ENCODE measurements at regions of chr2 and their contacts with region 1.

Region 1: DNA sequence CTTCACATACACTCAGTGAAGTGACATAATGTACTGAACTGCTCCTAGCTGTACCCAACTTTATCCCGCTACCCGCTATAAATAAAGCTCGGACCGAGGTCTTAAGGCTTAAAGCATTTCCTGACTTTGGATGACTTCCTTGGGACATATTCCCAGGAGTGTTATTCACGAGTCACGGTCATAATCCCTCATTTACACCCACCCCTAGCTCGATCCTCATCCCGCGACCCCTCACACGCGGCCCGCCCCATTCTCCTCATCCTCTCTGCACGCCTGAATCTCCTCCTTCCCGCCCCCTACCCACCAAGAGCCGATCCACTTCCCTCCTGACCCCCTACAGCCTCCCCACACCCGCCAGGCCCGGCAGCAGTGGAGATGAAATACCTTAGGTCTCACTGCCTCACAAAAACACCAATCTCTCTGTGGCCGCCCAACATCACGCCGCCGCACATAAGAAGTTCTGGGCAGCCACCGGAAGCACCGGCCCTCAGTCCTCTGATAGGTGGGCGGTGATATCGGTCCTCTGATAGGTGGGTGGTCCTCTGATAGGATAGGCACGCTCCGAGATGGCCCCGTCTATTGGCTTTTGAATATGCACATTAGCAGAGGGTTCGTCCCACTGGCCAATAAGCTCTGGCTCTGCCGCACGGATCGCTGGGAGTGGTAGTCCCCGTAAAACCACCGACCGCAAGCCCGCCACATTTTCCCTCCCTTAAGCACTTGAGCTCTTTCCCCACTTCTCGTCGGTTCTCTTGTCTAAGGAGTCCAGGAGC is at the start of gene WDCP:
- DNase-seq: peak; percentile 99
- ATAC-seq: peak; percentile 98
- H3K4me3 ChIP-seq: peak within 1 kb of the TSS; percentile 73
- H3K27ac ChIP-seq: peak within 1 kb of the TSS; percentile 61
- H3K4me1 ChIP-seq: no peaks in the 10 kb centered on the region
- H3K27me3 ChIP-seq: no peaks in the 10 kb centered on the region
- CTCF ChIP-seq: no peak
- POLR2A ChIP-seq: peak; percentile 79
- RAD21 ChIP-seq: no peak
- total RNA-seq, gene WDCP: 18.6 and 21.7 TPM in 2 replicates

Region 2: GRCh38 chr2:23939987-23940717 is 107.0 kb before region 1 on chr2 and contains the start of gene UBXN2A:
- CTCF ChIA-PET with region 1: no interaction called
- POLR2A ChIA-PET with region 1: no interaction called
- dilution Hi-C with region 1: no loop called
- in situ Hi-C with region 1: no loop called
- intact Hi-C with region 1: loop called (anchors 10 kb)
- DNase-seq: peak; percentile 77
- ATAC-seq: peak; percentile 89
- H3K4me3 ChIP-seq: peak within 1 kb of the TSS; percentile 96
- H3K27ac ChIP-seq: peak within 1 kb of the TSS; percentile 82
- H3K4me1 ChIP-seq: peaks cover 12% of the 10 kb centered on the region
- H3K27me3 ChIP-seq: no peaks in the 10 kb centered on the region
- CTCF ChIP-seq: no peak
- POLR2A ChIP-seq: no peak
- RAD21 ChIP-seq: no peak
- total RNA-seq, gene UBXN2A: 7.7 and 10.8 TPM in 2 replicates

Region 3: GRCh38 chr2:24088821-24089359 is 41.8 kb after region 1 on chr2:
- CTCF ChIA-PET with region 1: no interaction called
- POLR2A ChIA-PET with region 1: no interaction called
- dilution Hi-C with region 1: no loop called
- in situ Hi-C with region 1: no loop called
- intact Hi-C with region 1: no loop called
- DNase-seq: no peak
- ATAC-seq: no peak
- H3K4me3 ChIP-seq: no peak overlapping the region
- H3K27ac ChIP-seq: no peak overlapping the region
- H3K4me1 ChIP-seq: peaks cover 2% of the 10 kb centered on the region; the same call in 1 of the 2 replicates
- H3K27me3 ChIP-seq: no peaks in the 10 kb centered on the region
- CTCF ChIP-seq: no peak
- POLR2A ChIP-seq: no peak
- RAD21 ChIP-seq: no peak

Region 4: DNA sequence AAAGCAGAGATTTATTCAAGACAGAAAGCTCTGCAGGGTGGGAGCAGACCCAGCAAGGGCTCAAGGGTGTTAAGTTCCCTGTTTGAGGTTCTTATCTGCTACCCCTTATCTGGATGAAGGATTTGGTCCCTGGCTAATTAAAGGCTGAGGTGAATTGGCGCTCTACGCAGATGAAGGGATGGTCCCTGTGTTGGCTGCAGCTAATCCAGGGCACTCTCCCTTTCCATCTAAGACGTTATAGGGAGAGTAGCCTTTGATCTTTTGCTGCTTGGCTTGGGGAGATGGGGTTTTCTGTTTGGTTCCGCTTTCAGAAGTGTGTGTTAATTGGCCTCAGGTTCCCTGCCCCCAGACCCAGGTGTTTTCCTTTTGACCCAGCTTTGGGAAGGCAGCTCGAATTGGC is 144.7 kb after region 1 on chr2:
- CTCF ChIA-PET with region 1: no interaction called
- POLR2A ChIA-PET with region 1: no interaction called
- dilution Hi-C with region 1: no loop called
- in situ Hi-C with region 1: no loop called
- intact Hi-C with region 1: no loop called
- DNase-seq: no peak
- ATAC-seq: no peak
- H3K4me3 ChIP-seq: no peak overlapping the region
- H3K27ac ChIP-seq: no peak overlapping the region
- H3K4me1 ChIP-seq: no peaks in the 10 kb centered on the region
- H3K27me3 ChIP-seq: peaks cover 6% of the 10 kb centered on the region; the same call in 1 of the 2 replicates
- CTCF ChIP-seq: no peak
- POLR2A ChIP-seq: no peak
- RAD21 ChIP-seq: no peak

Measured in IMR-90 (cell line).